ENCODE measurements at regions of chr2 and their contacts with region 1.

Region 1: GRCh38 chr2:33321236-33321771 is 155.1 kb upstream of the RASGRP3 start:
- DNase-seq: peak; percentile 29
- H3K4me3 Mint-ChIP-seq: no peak overlapping the region
- H3K27ac Mint-ChIP-seq: peak overlapping the region; percentile 41
- H3K4me1 Mint-ChIP-seq: peaks cover 17% of the 10 kb centered on the region
- H3K27me3 Mint-ChIP-seq: peaks cover 9% of the 10 kb centered on the region

Region 2: DNA sequence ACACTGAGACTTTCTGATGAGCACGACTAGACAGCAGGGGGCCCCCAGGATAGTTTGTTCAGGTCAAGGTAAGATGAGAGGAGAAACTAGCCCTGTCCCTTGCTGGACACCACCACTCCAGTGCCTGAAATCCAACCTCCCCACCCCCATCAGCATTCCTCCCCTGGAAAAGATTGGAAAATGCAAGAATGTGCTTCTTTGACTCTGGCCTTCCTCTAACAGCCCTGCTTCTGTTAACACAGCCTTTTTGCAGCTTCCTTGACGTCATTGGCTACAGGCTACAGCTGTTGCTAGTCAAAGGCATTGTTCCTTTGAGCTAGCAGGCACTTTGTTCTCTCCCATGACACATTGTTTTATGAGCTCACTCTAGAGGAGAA is 394.6 kb before region 1 on chr2:
- CTCF ChIA-PET with region 1: no interaction called
- intact Hi-C with region 1: no loop called
- DNase-seq: no peak
- H3K4me3 Mint-ChIP-seq: no peak overlapping the region
- H3K27ac Mint-ChIP-seq: no peak overlapping the region
- H3K4me1 Mint-ChIP-seq: no peaks in the 10 kb centered on the region
- H3K27me3 Mint-ChIP-seq: peaks cover 16% of the 10 kb centered on the region

Region 3: DNA sequence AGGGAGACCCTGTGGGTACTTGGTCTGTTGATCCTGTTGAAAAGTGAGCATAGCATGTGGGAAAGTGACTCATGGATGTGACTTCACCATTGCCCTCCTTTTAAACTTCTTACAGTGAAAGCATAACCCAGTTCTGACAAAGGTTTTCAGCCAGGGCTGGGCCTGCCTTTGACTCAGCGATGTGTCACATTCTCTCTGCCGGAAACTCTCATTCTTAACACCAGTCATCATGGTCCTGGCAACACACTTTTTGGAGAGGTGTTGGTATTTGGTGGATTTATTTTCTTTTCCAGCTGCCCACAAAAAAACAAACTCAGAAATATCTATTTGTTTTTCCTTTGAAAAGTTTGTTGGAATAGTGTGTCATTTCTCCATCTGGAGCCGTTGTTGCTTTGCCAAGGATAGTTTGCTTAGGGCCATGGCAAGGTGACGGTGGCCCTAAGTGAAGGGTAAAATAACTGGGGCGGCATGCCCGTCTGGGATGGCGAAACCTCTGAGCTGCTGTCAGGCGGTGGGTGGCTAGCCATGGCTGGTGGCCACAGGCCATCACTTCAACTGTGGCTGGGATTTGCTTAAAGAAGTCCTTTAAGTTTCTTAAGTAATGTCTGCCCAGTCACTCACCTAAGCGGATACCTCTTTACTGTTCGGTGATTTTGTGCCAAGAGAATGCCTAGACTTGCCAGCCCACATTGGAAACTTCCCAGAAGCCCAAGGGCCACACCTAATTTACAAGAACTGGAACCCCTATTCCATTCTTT is 251.2 kb before region 1 on chr2:
- CTCF ChIA-PET with region 1: no interaction called
- intact Hi-C with region 1: loop called (anchors 1 kb)
- DNase-seq: peak; percentile 66
- H3K4me3 Mint-ChIP-seq: no peak overlapping the region
- H3K27ac Mint-ChIP-seq: no peak overlapping the region
- H3K4me1 Mint-ChIP-seq: peaks cover 7% of the 10 kb centered on the region
- H3K27me3 Mint-ChIP-seq: peaks cover 16% of the 10 kb centered on the region

Region 4: DNA sequence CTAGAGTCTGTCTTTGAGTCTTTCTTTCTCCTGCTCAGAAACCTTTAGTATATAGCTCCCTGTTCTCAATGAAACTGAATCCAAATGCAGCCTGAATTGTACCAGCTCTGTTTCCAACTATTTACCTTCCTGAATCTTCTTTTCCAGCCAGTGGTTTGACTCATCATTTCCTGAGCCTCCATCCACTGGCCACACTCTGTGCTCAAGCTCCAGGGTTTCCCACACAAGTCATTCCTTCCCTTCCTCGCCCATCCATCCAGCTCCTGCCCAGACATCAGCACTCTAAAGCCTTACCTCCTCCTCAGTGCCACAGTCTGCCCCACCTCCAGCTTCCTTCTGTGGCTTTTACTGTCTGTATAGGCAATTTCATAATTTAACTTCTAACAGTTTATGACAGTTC is 78.5 kb before region 1 on chr2:
- CTCF ChIA-PET with region 1: no interaction called
- intact Hi-C with region 1: no loop called
- DNase-seq: no peak
- H3K4me3 Mint-ChIP-seq: no peak overlapping the region
- H3K27ac Mint-ChIP-seq: no peak overlapping the region
- H3K4me1 Mint-ChIP-seq: no peaks in the 10 kb centered on the region
- H3K27me3 Mint-ChIP-seq: no peaks in the 10 kb centered on the region

Region 5: DNA sequence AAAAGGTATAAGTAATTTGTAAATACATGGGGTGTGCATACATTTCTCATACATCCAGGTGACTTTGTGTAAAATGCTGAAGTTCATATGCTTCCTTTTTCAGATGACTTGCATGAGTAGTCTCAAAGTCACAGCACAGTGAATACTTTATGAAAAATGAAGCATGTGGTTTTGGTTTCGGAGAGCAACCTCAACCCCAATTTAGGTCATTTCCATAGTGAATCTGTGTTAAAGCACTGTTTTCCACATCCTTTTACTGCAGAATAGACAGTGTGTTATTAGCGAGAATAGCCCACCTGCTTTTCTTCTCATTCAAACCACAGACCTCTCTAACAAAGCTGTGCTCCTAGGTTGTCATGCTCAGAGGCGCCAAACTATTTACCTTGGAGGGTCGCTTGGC is 49.3 kb before region 1 on chr2:
- CTCF ChIA-PET with region 1: interaction called, 3 read pairs
- intact Hi-C with region 1: loop called (anchors 1 kb)
- DNase-seq: peak; percentile 6
- H3K4me3 Mint-ChIP-seq: no peak overlapping the region
- H3K27ac Mint-ChIP-seq: no peak overlapping the region
- H3K4me1 Mint-ChIP-seq: no peaks in the 10 kb centered on the region
- H3K27me3 Mint-ChIP-seq: peaks cover 8% of the 10 kb centered on the region

Region 6: DNA sequence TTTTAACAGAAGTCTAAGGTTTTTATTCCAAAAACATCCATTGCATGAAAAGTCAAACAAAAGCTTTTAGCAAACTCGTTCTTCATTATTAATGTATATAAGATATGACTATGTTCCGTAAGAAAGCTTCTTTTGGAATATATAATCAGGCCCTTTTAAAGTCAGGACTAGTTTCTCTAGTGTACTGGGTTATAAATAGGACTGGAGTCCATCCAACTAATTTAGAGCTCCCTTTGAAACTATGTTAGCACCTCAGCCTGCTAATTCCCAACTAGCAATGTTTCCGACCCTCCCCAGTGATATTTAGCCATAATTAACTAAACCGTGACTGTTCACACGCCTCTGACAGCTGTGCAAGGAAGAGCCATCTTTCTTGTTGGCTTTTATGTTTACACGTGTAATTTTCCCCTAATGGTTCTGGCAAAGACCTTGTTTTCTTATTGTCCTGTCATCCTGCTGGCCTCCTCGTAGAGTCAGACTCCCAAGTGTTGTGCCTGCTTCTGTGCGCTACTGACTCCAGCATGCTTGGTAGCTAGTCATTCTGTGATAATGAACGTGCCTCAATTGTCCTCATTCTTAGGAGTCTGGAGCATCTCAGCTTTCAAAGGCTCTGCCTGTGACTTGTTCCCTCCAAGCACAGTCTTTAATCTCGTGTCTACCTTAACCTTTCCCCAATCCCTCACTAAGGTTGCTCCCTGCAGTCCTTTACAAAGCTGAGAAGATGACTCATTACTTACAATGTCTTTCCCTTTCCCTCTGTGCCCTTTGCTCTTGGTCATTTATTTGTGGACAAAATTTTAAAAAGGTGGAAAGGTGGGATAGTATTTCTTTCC is 17.1 kb before region 1 on chr2:
- CTCF ChIA-PET with region 1: no interaction called
- intact Hi-C with region 1: no loop called
- DNase-seq: no peak
- H3K4me3 Mint-ChIP-seq: no peak overlapping the region
- H3K27ac Mint-ChIP-seq: no peak overlapping the region
- H3K4me1 Mint-ChIP-seq: no peaks in the 10 kb centered on the region
- H3K27me3 Mint-ChIP-seq: no peaks in the 10 kb centered on the region

Measured in activated naive CD4-positive, alpha-beta T cell treated with anti-CD3 and anti-CD28 coated beads for 36 hours (primary cell).